HEK293 (cell line): ENCODE measurements at regions of chr6 and their contacts with region 1.

Region 1: GRCh38 chr6:54717849-54718455 is 128.6 kb upstream of the FAM83B start:
- H3K4me3 ChIP-seq: no peak overlapping the region
- H3K27ac ChIP-seq: peak overlapping the region; percentile 61
- H3K4me1 ChIP-seq: peaks cover 11% of the 10 kb centered on the region; the same call in 1 of the 2 replicates
- CTCF ChIP-seq: 0 out of 2 replicates have a peak, but pooled peaks have one; percentile 28

Region 2: DNA sequence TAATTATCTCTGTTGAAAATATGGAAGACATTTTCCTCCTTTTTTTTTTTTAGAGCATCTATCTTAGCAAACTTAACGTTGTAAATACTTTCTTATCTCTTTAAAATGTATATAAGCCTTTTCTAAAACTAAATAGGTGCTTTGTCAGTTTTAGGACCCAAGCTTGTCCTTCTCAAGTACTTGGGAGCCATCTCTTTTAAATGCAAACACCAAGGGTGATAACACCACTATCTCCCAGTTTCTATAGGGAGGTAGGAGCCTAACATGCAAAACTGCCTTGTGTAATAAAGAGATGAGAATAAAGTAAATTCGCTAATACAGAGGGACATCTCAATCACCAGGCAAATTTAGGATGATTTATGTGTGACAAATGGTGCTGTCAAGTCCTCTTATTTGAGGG is 28.3 kb before region 1 on chr6:
- CTCF ChIA-PET with region 1: interaction called, 12 read pairs
- POLR2A ChIA-PET with region 1: no interaction called
- H3K4me3 ChIP-seq: no peak overlapping the region
- H3K27ac ChIP-seq: no peak overlapping the region
- H3K4me1 ChIP-seq: peaks cover 12% of the 10 kb centered on the region; the same call in 1 of the 2 replicates
- CTCF ChIP-seq: no peak

Region 3: DNA sequence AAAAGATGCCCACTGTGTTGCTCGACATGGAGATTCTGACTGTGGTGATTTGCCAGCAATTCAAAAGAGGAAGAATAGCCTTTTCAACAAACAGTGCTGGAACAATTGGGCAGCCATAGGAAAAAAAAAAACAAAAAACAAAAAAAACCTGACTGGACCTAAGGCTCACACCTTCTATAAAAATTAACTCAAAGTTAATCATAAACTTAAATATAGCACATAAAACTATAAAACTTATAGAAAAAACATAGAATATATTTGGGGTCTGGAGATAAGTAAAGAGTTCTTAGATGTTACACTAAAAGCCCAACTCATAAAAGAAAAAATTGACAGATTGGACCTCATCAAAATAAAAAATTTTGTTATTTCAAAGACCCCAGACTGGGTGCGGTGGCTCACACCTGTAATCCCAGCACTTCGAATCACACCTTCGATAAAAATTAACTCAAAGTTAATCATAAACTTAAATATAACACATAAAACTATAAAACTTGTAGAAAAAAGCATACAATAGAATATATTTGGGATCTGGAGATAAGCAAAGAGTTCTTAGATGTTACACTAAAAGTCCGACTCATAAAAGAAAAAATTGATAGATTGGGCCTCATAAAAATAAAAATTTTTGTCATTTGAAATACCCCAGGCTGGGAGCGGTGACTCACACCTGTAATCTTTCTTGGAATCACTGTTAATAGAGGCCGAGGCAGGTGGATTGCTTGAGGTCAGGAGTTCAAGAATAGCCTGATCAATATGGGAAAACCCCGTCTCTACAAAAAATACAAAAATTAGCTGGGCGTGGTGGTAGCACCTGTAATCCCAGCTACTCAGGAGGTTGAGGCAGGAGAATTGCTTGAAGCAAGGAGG is 13.0 kb after region 1 on chr6:
- CTCF ChIA-PET with region 1: interaction called, 13 read pairs
- POLR2A ChIA-PET with region 1: interaction called, 4 read pairs
- H3K4me3 ChIP-seq: no peak overlapping the region
- H3K27ac ChIP-seq: no peak overlapping the region
- H3K4me1 ChIP-seq: no peaks in the 10 kb centered on the region
- CTCF ChIP-seq: no peak

Region 4: DNA sequence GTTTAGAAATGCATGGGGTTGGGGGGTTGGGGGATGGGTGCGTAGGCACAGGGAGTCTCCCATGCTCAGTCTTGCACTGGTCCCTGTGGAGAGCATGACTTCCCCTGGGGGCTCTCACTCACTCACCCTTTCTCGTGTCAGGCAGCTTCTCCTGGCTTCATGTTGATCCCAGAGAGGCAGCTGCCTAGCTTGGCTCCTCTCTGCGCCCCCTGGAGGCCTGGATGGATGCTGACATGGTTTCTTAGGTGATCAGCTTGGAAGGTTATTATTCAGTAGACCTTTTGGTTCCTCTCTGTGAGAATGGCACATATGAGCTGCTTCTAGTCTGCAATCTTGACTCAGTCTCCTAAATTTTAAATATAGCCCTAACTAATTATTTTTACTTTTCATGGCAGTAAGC is 19.3 kb after region 1 on chr6:
- CTCF ChIA-PET with region 1: interaction called, 13 read pairs
- POLR2A ChIA-PET with region 1: interaction called, 4 read pairs
- H3K4me3 ChIP-seq: no peak overlapping the region
- H3K27ac ChIP-seq: no peak overlapping the region
- H3K4me1 ChIP-seq: no peaks in the 10 kb centered on the region
- CTCF ChIP-seq: no peak

Region 5: DNA sequence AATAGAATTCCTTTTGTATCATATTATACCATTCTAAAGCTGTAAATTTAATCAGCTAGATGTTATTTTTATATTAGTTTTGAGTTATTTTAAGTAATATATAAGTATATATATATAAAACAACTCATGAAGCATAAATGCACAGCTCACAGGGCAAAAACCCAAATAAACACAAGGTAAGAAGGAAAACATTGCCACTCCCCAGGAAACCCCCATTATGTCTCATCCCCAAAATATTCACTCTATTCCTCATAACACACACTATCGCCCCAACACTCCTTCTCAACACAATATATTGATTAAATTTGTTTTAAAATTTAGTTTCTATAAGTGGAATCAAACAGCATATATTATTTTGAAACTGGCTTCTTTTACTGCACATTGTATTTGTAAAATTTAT is 30.0 kb after region 1 on chr6:
- CTCF ChIA-PET with region 1: interaction called, 15 read pairs
- POLR2A ChIA-PET with region 1: no interaction called
- H3K4me3 ChIP-seq: no peak overlapping the region
- H3K27ac ChIP-seq: no peak overlapping the region
- H3K4me1 ChIP-seq: no peaks in the 10 kb centered on the region
- CTCF ChIP-seq: no peak

Region 6: GRCh38 chr6:54992789-54993188 is 274.8 kb after region 1 on chr6:
- CTCF ChIA-PET with region 1: interaction called, 46 read pairs
- POLR2A ChIA-PET with region 1: no interaction called
- H3K4me3 ChIP-seq: no peak overlapping the region
- H3K27ac ChIP-seq: no peak overlapping the region
- H3K4me1 ChIP-seq: no peaks in the 10 kb centered on the region
- CTCF ChIP-seq: 0 out of 2 replicates have a peak, but pooled peaks have one; percentile 17

Region 7: DNA sequence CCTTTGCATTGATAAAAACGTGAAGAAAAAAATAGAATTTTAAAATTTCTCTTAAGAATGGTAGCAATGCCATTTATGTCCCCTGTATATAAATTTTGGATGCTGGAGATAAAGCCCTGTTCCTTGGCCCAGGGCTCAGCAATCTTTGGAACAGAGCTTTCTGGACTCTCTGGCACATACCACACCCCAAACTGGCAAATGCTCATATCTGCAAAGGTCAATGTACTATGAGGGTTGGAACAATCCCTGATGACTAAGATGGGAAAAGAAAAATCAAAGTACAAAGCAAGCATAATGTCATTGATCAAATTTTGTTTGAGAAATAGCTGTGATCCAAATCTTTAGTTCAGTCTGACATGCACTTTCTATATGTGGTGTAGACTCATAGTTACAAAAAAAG is 298.3 kb after region 1 on chr6:
- CTCF ChIA-PET with region 1: no interaction called
- POLR2A ChIA-PET with region 1: no interaction called
- H3K4me3 ChIP-seq: no peak overlapping the region
- H3K27ac ChIP-seq: no peak overlapping the region
- H3K4me1 ChIP-seq: no peaks in the 10 kb centered on the region
- CTCF ChIP-seq: no peak

Region 8: DNA sequence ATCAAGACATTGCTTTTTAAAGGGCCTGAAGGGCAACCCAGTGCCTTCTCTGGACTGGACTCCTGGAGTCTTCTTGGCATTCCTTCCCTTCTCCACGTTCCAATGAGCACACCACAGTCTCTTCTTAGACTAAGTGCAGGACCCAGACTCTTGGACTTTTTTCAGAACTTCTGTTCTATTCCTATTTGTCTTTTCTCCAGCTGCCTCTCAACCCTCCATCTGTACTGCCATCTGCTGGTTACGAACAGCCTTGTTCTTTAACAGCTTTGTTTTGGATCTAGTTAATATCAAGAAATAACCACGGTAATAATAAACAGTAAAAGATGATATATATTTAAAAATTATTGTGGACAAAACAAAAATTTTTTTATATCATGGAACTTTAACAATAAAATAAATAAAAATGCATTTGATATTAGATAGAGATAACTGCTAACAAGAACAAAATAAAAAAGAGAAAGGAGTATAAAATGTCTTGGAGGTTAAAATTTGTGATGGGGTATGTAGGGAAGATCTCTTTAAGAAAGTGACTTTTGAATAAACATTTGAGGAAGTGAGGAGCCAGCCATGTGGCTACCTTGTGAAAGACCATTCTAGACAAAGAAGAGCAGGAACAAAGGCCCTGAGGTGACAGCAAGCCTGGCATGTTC is 351.3 kb after region 1 on chr6:
- CTCF ChIA-PET with region 1: interaction called, 12 read pairs
- POLR2A ChIA-PET with region 1: no interaction called
- H3K4me3 ChIP-seq: no peak overlapping the region
- H3K27ac ChIP-seq: no peak overlapping the region
- H3K4me1 ChIP-seq: no peaks in the 10 kb centered on the region
- CTCF ChIP-seq: no peak